Left colon (tissue), 2 donors: ENCODE measurements at regions of chr11 and their contacts with region 1.

Region 1: GRCh38 chr11:128279866-128280265 is 307.5 kb downstream of the ETS1 start:
- DNase-seq: no peak
- ATAC-seq: no peak

Region 2: DNA sequence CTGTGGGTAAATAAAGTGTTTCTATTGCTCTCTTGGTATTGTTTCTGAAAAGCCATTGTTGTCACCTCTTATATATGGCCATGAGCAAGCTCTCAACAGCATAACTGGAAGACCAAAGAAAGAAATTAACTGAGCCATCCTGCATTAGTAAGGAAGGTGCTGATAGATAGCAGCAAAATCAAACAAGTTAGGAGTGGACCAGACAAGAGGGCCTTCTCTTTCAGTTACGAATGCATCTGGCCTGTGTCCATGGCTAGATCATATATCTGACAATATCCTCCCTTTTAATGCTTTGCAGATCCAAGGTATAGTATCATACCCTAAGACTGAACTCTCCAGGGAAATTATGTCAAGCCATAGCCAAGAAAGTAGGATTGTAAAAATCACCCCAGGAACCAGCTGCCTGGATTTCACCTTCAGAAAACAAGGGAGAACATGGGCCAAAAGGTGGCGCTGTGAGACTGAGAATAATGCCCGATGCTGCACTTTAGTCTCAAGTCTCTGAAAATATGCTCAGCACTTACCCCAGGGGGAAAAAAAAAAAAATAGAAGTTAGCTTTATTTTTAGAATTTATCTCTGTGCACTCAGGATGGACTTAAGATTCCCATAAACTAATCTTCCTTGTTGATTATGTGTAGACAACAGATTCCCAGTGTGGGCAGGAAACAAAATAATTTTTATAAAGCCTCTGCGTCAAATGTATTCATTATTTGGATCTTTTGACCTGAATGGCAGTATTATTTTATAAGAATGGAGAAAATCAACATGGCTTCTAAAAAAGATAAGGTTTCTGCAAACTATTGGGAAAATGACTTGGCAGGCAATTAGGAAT is 107.6 kb before region 1 on chr11:
- intact Hi-C with region 1: loop called in 1 of 2 experiments (anchors 10 kb)
- DNase-seq: peak; percentile 60 to 91
- ATAC-seq: peak; percentile 76

Region 3: GRCh38 chr11:128195057-128195751 is 84.7 kb before region 1 on chr11:
- intact Hi-C with region 1: no loop called
- DNase-seq: no peak
- ATAC-seq: no peak

Region 4: GRCh38 chr11:128624269-128625175 is 344.7 kb after region 1 on chr11:
- intact Hi-C with region 1: loop called in 1 of 2 experiments (anchors 10 kb)
- DNase-seq: peak in 1 of 2 donors; percentile 36
- ATAC-seq: peak; percentile 13